Activated CD8-positive, alpha-beta T cell treated with anti-CD3 and anti-CD28 coated beads for 36 hours (primary cell): ENCODE measurements at regions of chr9 and their contacts with region 1.

Region 1: GRCh38 chr9:121399883-121400607 is 30.0 kb upstream of the STOM start:
- DNase-seq: no peak
- ATAC-seq: peak; percentile 56
- H3K4me3 Mint-ChIP-seq: no peak overlapping the region
- H3K27ac Mint-ChIP-seq: no peak overlapping the region
- H3K4me1 Mint-ChIP-seq: peaks cover 2% of the 10 kb centered on the region
- H3K27me3 Mint-ChIP-seq: no peaks in the 10 kb centered on the region
- CTCF ChIP-seq: peak; percentile 76

Region 2: GRCh38 chr9:121278535-121279261 is 121.3 kb before region 1 on chr9:
- CTCF ChIA-PET with region 1: interaction called, 15 read pairs
- POLR2A ChIA-PET with region 1: no interaction called
- intact Hi-C with region 1: no loop called
- DNase-seq: peak; percentile 73
- ATAC-seq: peak; percentile 93
- H3K4me3 Mint-ChIP-seq: no peak overlapping the region
- H3K27ac Mint-ChIP-seq: no peak overlapping the region
- H3K4me1 Mint-ChIP-seq: peaks cover 5% of the 10 kb centered on the region
- H3K27me3 Mint-ChIP-seq: no peaks in the 10 kb centered on the region
- CTCF ChIP-seq: peak; percentile 88

Region 3: DNA sequence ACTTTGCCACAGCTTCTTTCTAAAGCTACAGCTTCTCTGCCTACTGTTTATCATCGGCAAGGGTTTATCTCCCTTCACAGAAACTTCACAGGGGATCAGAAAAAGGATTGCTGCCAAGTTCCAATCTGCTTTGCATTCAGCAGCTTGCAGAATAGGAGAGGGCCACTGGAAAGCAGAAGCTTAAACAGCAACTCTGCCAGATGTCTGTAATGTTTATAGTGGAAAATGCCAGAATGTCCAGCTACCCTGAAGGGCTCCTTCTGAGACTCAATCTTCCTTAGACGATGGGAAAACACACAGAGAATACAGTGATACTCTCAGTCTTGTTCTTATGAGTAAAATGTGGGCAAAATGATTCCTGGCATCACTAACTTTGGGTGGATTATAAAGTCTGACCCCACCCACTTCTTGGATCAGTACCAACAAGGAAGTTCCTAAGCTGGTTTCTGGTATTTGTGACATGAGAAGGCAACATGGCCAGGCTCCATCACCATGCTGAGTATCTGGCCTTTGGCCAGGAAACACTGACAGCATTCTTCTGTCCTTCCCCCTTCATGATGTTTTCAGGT is 49.0 kb before region 1 on chr9:
- CTCF ChIA-PET with region 1: interaction called, 11 read pairs
- POLR2A ChIA-PET with region 1: no interaction called
- intact Hi-C with region 1: no loop called
- DNase-seq: no peak
- ATAC-seq: no peak
- H3K4me3 Mint-ChIP-seq: no peak overlapping the region
- H3K27ac Mint-ChIP-seq: no peak overlapping the region
- H3K4me1 Mint-ChIP-seq: peaks cover 38% of the 10 kb centered on the region
- H3K27me3 Mint-ChIP-seq: no peaks in the 10 kb centered on the region
- CTCF ChIP-seq: no peak

Region 4: DNA sequence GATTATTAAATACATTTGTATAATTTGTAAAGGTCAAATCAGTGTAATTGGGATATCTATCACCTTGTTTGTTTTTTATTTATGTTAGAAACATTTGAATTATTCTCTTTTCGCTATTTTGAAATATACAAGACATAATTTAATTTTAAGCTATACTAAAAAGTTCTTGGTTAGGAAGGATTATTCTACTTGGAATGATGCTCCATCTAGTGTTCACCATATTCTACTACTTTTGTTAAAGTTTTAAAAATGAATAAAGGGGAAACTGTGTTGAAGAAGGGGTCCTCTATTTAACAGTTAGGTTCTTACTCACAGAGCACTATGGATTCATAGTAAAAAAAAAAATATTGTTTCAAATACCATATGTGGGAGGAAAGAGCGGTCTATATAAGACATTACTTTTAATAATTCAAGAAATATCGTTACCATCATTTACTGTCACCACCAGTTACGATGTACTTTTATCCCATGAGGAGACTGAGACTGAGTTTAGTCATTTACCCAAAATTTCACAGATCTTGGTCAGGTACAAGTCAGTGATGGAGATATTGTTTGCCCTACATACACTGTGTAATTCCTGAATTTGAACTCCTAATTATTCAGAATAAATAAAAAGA is 23.7 kb before region 1 on chr9:
- CTCF ChIA-PET with region 1: interaction called, 20 read pairs
- POLR2A ChIA-PET with region 1: no interaction called
- intact Hi-C with region 1: no loop called
- DNase-seq: no peak
- ATAC-seq: no peak
- H3K4me3 Mint-ChIP-seq: no peak overlapping the region
- H3K27ac Mint-ChIP-seq: no peak overlapping the region
- H3K4me1 Mint-ChIP-seq: peaks cover 19% of the 10 kb centered on the region
- H3K27me3 Mint-ChIP-seq: peaks cover 3% of the 10 kb centered on the region
- CTCF ChIP-seq: peak; percentile 35

Region 5: DNA sequence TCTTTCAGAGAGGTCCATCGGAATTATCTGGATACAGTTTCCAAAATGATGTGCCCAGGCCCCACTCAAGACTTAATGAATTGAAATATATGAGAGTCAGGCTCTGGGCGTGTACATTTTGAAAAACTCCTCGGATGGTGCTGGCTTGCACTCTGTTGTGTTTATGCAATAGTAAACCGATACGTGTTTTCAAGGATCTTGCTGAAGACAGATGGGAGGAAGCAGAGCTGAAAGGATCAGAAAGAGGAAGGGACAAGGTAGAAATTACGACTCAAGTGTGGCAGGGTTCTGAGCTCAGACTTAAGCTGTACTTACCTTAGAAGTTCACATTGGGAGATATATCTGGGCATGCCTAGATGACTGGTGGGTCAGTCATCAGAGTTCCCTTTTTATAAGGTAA is 16.3 kb before region 1 on chr9:
- CTCF ChIA-PET with region 1: interaction called, 20 read pairs
- POLR2A ChIA-PET with region 1: no interaction called
- intact Hi-C with region 1: no loop called
- DNase-seq: no peak
- ATAC-seq: no peak
- H3K4me3 Mint-ChIP-seq: no peak overlapping the region
- H3K27ac Mint-ChIP-seq: no peak overlapping the region
- H3K4me1 Mint-ChIP-seq: no peaks in the 10 kb centered on the region
- H3K27me3 Mint-ChIP-seq: no peaks in the 10 kb centered on the region
- CTCF ChIP-seq: no peak